Transverse colon (tissue), 4 donors: ENCODE measurements at regions of chr6 and their contacts with region 1.

Region 1: DNA sequence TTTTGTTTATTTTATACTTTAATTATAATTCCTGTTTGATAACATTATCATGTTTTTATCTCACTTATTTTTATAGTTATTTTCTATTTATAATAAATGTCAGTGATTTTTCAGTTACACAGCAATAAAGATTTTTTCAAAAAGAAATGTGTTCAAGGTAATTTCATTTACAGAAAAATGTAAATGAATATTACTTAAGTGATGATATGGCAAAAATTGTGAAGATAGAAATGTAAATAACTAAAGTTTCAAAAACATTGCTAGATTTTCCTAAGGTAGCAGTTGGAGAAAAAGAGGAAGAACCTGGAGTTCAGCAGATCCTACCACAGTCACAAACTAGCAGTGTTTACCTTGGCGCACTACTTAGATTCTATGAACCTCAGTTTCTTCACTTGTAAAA is 202.6 kb downstream of the RFPL4B start:
- DNase-seq: no peak
- H3K4me3 ChIP-seq: no peak overlapping the region
- H3K27ac ChIP-seq: no peak overlapping the region
- H3K4me1 ChIP-seq: no peaks in the 10 kb centered on the region
- H3K27me3 ChIP-seq: no peaks in the 10 kb centered on the region
- CTCF ChIP-seq: no peak
- EP300 ChIP-seq: no peak
- POLR2A ChIP-seq: no peak

Region 2: GRCh38 chr6:112744827-112745226 is 195.1 kb after region 1 on chr6:
- in situ Hi-C with region 1: no loop called
- intact Hi-C with region 1: loop called (anchors 2 kb)
- DNase-seq: no peak
- H3K4me3 ChIP-seq: no peak overlapping the region
- H3K27ac ChIP-seq: no peak overlapping the region
- H3K4me1 ChIP-seq: no peaks in the 10 kb centered on the region
- H3K27me3 ChIP-seq: no peaks in the 10 kb centered on the region
- CTCF ChIP-seq: no peak
- EP300 ChIP-seq: no peak
- POLR2A ChIP-seq: no peak

Region 3: DNA sequence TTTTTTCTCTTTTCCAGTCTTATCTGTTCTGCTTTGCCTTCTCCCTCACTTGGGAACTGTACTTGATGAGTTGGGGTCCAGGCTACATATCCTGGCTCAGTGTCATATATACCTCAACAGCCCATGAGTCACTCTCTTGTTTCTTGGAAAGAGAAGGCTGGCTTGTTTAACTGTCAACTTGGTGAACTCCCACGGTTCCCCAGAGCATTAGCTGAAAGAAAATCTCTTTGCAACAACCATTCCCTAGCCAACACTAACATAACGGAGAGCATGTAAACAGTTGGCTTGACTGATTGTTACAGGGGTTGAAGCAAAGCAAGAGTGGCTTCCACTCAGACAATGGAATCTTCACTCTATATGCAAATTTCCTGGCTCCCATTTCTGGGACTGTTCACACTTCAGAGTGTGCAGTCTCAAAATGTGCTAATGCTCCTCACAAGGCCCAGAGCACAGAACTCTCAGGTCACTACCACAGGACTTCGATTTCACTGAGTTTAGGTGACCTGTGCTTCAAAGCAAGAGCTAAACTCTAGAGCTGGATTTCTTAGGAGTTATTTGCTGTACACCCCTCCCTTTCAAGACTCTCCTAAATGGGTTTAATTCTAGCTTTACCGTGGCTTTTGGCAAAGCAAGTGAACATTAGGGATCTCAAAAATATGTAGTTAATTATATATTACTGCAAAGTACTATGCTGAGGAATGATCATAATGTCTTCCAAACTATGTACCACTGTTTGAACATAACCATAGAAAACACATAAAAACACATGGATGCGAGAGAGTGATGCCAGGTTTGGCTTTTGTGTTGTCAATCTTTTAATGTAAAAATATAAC is 407.2 kb after region 1 on chr6:
- in situ Hi-C with region 1: no loop called
- intact Hi-C with region 1: no loop called
- DNase-seq: no peak
- H3K4me3 ChIP-seq: no peak overlapping the region
- H3K27ac ChIP-seq: no peak overlapping the region
- H3K4me1 ChIP-seq: peaks cover 0 to 6% (median 0%) of the 10 kb centered on the region in 4 donors
- H3K27me3 ChIP-seq: no peaks in the 10 kb centered on the region
- CTCF ChIP-seq: no peak
- EP300 ChIP-seq: no peak
- POLR2A ChIP-seq: no peak